PC-3 (cell line): ENCODE measurements at regions of chr2 and their contacts with region 1.

Region 1: GRCh38 chr2:121634354-121635307 is 14.6 kb downstream of the CLASP1 start:
- DNase-seq: peak; percentile 95
- ATAC-seq: peak; percentile 94
- H3K4me3 ChIP-seq: peak overlapping the region; percentile 25; the same call in 1 of the 2 replicates
- H3K27ac ChIP-seq: peak overlapping the region; percentile 97
- H3K4me1 ChIP-seq: peaks cover 27% of the 10 kb centered on the region
- H3K27me3 ChIP-seq: no peaks in the 10 kb centered on the region
- CTCF ChIP-seq: no peak

Region 2: GRCh38 chr2:121338281-121338680 is 296.4 kb before region 1 on chr2:
- CTCF ChIA-PET with region 1: no interaction called
- POLR2A ChIA-PET with region 1: no interaction called
- intact Hi-C with region 1: no loop called
- DNase-seq: no peak
- ATAC-seq: no peak
- H3K4me3 ChIP-seq: no peak overlapping the region
- H3K27ac ChIP-seq: no peak overlapping the region
- H3K4me1 ChIP-seq: no peaks in the 10 kb centered on the region
- H3K27me3 ChIP-seq: no peaks in the 10 kb centered on the region
- CTCF ChIP-seq: no peak

Region 3: DNA sequence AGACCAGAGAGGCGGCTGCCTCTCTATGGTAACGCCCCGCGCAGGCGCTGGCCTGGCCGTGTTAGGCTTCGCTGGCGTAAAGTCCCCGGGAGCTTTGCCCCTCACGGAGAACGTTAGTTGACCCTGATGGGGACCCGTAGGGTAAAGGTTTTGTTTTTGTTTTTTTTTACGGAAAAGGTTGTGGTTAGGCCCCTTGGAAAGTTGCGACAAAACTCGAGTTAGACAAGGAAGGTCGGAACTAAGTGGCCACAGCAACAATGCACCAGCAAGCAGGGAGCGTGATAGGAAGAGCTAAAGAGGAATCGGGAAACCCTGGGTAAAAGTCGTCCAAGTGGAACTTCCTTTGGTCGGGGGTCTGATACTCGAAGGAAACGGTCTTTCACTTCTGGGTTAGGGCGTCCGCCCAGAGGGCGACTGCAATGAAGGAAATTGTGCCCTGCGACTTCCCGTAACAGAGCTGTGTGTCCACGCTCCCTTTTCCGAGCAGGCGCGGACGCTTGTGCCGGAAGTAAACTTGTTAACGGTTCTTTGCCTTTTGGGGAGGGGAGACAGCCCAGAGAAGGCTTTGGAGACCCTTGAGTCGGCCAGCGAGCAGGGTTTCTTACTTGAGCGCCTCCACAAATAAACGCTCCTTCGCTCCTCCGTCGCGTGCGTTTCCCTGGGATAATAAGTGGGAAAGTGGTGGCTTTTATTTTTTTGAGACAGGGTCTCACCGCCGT is 15.1 kb after region 1 on chr2:
- CTCF ChIA-PET with region 1: no interaction called
- POLR2A ChIA-PET with region 1: no interaction called
- intact Hi-C with region 1: loop called (anchors 1 kb)
- DNase-seq: peak; percentile 96
- ATAC-seq: peak; percentile 90
- H3K4me3 ChIP-seq: peak overlapping the region; percentile 87
- H3K27ac ChIP-seq: peak overlapping the region; percentile 85
- H3K4me1 ChIP-seq: peaks cover 21% of the 10 kb centered on the region
- H3K27me3 ChIP-seq: no peaks in the 10 kb centered on the region
- CTCF ChIP-seq: no peak